ENCODE measurements at regions of chr19 and their contacts with region 1.

Region 1: GRCh38 chr19:18000935-18001778 is 6.8 kb upstream of the ARRDC2 start:
- DNase-seq: peak; percentile 89 to 98 (median 96)
- ATAC-seq: peak; percentile 83
- H3K4me3 Mint-ChIP-seq: peak overlapping the region; percentile 86 to 96 (median 92)
- H3K27ac Mint-ChIP-seq: peak overlapping the region; percentile 97 to 100 (median 99)
- H3K4me1 Mint-ChIP-seq: peaks cover 9 to 38% (median 29%) of the 10 kb centered on the region in 4 donors
- H3K27me3 Mint-ChIP-seq: no peaks in the 10 kb centered on the region

Region 2: DNA sequence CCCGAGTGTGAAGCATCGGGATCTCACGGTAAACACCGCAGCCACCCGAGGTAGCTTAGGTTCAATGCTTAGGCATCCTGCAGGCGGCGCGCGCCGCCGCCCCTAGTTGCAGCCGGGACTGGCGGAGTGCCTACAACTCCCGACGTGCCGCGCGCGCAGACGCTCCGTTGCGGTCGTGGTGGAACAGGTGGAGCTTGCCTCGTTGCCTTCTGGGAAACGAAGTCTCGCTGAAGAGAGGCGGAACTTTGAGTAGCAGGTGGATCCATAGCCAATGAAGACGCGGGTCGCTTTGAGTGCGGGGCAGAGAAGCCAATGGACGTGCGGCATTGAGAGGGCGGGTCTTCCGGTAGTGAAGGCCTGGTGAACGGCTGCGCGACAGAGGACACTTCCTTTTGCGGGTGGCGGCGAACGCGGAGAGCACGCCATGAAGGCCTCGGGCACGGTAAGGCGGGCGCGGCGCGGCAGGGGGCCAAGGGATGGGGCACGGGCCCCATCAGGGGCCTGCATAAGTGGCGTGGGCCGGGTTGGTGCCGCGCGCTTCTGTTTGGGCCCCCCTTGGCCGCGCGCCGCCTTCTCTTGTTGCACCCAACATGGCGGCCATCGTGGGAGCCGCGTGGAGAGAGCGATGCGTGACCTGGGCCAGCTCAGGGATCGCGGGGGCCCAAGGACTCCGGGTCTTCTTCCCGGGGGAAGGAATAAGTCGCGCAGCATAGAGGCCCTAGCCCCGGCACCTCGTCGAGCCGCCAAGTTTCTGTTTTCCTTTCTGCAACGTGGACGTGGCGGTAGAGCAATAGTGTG is 141.4 kb before region 1 on chr19 and contains the start of gene RPL18A:
- POLR2A ChIA-PET with region 1: interaction called, 26 read pairs
- DNase-seq: peak; percentile 91 to 99 (median 98)
- ATAC-seq: peak; percentile 94 to 95
- H3K4me3 Mint-ChIP-seq: peak within 1 kb of the TSS; percentile 91 to 100 (median 99)
- H3K27ac Mint-ChIP-seq: peak within 1 kb of the TSS; percentile 95 to 100 (median 98)
- H3K4me1 Mint-ChIP-seq: peaks cover 19 to 42% (median 39%) of the 10 kb centered on the region in 4 donors
- H3K27me3 Mint-ChIP-seq: peaks cover 0 to 1% (median 0%) of the 10 kb centered on the region in 5 donors
- polyA plus RNA-seq, gene RPL18A: 3,790 to 4,859 (median 4,546) TPM

Region 3: GRCh38 chr19:17938092-17938845 is 62.9 kb before region 1 on chr19:
- POLR2A ChIA-PET with region 1: interaction called, 37 read pairs
- DNase-seq: peak; percentile 71 to 89 (median 80)
- ATAC-seq: peak; percentile 98 to 99
- H3K4me3 Mint-ChIP-seq: no peak overlapping the region
- H3K27ac Mint-ChIP-seq: no peak overlapping the region
- H3K4me1 Mint-ChIP-seq: peaks cover 4 to 21% (median 10%) of the 10 kb centered on the region in 4 donors
- H3K27me3 Mint-ChIP-seq: no peaks in the 10 kb centered on the region

Region 4: GRCh38 chr19:17985037-17985818 is 15.9 kb before region 1 on chr19:
- POLR2A ChIA-PET with region 1: no interaction called
- DNase-seq: no peak
- ATAC-seq: no peak
- H3K4me3 Mint-ChIP-seq: no peak overlapping the region
- H3K27ac Mint-ChIP-seq: peak overlapping the region in 2 of 10 donors; percentile 19 to 65
- H3K4me1 Mint-ChIP-seq: peaks cover 0 to 3% (median 0%) of the 10 kb centered on the region in 4 donors
- H3K27me3 Mint-ChIP-seq: peaks cover 2 to 34% (median 5%) of the 10 kb centered on the region in 5 donors

Region 5: DNA sequence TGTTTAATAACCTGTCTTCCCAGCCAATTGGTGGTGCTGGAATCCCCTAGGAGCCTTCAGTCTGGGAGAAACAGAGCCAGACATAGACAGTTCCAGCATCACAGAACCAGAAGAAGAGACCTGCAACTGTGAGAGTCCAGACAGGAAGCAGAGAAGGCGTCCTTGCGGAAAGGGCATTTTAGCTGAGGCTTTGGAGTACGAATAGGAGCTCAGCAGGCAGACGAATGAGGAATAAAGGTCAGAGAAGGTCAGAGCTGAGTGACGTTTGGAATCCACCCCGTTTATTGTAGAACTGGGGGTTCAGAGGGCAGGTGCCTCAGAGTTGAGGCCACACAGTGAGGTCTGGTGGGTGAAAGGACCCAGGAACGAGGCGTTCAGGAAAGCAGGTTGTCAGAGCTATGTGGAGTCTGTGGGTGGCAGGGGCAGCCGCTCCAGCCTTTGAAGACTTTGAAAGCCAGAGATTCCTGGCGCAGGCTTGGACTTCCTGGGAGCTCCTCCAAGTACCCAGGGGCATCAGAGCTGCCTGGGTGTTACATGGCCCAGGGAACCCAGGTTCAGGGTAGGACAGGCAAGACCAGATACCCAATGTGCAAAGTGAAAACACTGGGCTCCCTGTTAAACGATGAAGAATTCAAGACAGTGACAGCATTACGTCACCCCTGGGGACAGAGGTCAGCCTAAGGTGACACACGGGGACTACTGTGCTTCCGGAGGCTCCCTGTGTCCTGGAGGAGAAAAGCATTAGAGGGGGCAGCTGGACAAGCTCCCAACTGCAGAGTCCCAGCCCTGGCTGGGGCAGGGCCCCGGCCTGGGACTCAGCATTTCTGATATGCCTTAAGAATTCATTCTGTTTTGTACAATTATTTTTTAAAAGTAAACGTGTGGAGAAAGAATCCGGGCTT is 12.3 kb after region 1 on chr19:
- POLR2A ChIA-PET with region 1: interaction called, 24 read pairs
- DNase-seq: peak in 1 of 10 donors; percentile 26
- ATAC-seq: peak; percentile 24 to 35
- H3K4me3 Mint-ChIP-seq: peak overlapping the region; percentile 61 to 95 (median 84)
- H3K27ac Mint-ChIP-seq: peak overlapping the region; percentile 95 to 100 (median 98)
- H3K4me1 Mint-ChIP-seq: peaks cover 35 to 75% (median 68%) of the 10 kb centered on the region in 4 donors
- H3K27me3 Mint-ChIP-seq: no peaks in the 10 kb centered on the region

Region 6: GRCh38 chr19:18058208-18059030 is 57.3 kb after region 1 on chr19:
- POLR2A ChIA-PET with region 1: interaction called, 153 read pairs
- DNase-seq: peak; percentile 73 to 91 (median 84)
- ATAC-seq: peak; percentile 94 to 96
- H3K4me3 Mint-ChIP-seq: peak overlapping the region in 8 of 10 donors; percentile 29 to 69 (median 48)
- H3K27ac Mint-ChIP-seq: peak overlapping the region; percentile 54 to 94 (median 86)
- H3K4me1 Mint-ChIP-seq: peaks cover 7 to 22% (median 17%) of the 10 kb centered on the region in 4 donors
- H3K27me3 Mint-ChIP-seq: no peaks in the 10 kb centered on the region

Region 7: GRCh38 chr19:18117692-18118378 is 116.7 kb after region 1 on chr19:
- POLR2A ChIA-PET with region 1: interaction called, 13 read pairs
- DNase-seq: peak; percentile 92 to 98 (median 96)
- ATAC-seq: peak; percentile 69 to 73
- H3K4me3 Mint-ChIP-seq: peak overlapping the region; percentile 79 to 95 (median 90)
- H3K27ac Mint-ChIP-seq: peak overlapping the region; percentile 95 to 100 (median 98)
- H3K4me1 Mint-ChIP-seq: peaks cover 18 to 48% (median 40%) of the 10 kb centered on the region in 4 donors
- H3K27me3 Mint-ChIP-seq: no peaks in the 10 kb centered on the region

Measured in naive thymus-derived CD8-positive, alpha-beta T cell (primary cell).